Tibial artery (tissue), 4 donors: ENCODE measurements at regions of chr18 and their contacts with region 1.

Region 1: DNA sequence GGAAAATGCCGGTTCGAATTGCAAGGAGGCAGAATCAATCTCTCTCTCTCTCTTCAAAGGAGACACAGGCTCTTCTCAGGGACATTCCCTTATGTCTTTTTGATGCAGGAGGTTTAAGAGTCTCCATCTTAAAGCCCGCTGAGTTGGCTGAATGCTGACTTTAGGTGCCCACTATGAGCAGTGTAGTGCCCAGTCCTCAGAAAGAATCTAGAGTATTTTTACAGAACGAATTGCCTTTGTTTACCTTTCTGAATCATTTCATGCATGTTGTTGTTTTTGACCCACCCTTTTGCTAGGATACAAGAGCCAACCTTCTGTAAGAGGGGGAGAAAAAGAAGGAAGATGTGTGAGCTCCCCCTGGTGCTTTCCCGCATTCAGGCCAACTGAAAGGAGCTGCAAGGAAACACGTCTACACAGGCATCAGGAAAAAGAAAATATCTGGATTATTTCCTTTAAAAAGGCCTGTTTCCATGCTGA is 193.5 kb upstream of the TCF4 start:
- DNase-seq: no peak
- H3K4me3 ChIP-seq: no peak overlapping the region
- H3K27ac ChIP-seq: no peak overlapping the region
- H3K4me1 ChIP-seq: peaks cover 0 to 15% (median 10%) of the 10 kb centered on the region in 4 donors
- H3K27me3 ChIP-seq: peaks cover 3 to 14% of the 10 kb centered on the region in 2 donors
- CTCF ChIP-seq: peak; percentile 38 to 41

Region 2: DNA sequence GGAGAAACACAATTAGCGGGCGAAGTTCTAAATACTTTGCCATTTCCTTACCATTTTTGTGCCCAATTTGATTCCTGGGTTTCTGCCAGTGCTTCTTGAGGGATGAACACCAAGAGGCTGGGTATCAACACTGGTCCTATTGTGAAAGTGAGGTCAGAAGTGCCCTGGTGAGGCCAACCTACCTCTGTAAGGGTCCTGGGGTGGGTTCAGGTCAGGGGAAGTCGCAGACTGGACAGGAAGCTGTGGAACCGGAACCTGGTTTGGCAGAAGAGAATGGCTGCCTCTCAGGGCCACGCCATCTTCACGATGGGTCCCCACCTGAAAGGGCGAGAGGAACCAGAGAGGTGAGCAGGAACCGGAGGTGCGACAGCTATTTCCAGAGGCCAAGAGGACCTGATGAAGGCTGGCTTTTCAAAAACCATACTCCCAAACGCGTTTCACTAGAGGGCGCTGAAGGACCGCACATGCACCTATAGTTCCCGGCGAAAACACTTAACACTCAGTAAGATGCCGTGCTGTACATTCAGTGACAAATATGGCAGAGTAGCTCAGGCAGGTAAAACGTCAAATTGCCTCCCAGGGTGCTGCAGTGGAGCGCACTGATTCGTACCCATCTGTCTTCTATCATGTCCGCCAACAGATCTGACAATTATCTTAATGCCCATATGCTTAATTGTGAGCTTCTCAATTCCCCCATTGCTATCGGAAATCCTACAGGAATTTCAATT is 547.0 kb before region 1 on chr18:
- intact Hi-C with region 1: loop called (anchors 10 kb)
- DNase-seq: peak; percentile 78 to 79
- H3K4me3 ChIP-seq: peak overlapping the region in 1 of 2 donors; percentile 23
- H3K27ac ChIP-seq: no peak overlapping the region
- H3K4me1 ChIP-seq: peaks cover 0 to 17% (median 2%) of the 10 kb centered on the region in 4 donors
- H3K27me3 ChIP-seq: no peaks in the 10 kb centered on the region
- CTCF ChIP-seq: peak; percentile 71 to 79

Region 3: GRCh38 chr18:55415258-55415871 is 366.2 kb before region 1 on chr18:
- intact Hi-C with region 1: loop called (anchors 10 kb)
- DNase-seq: peak; percentile 88 to 94
- H3K4me3 ChIP-seq: no peak overlapping the region
- H3K27ac ChIP-seq: no peak overlapping the region
- H3K4me1 ChIP-seq: no peaks in the 10 kb centered on the region
- H3K27me3 ChIP-seq: no peaks in the 10 kb centered on the region
- CTCF ChIP-seq: peak; percentile 82 to 85

Region 4: GRCh38 chr18:55748227-55748738 is 33.2 kb before region 1 on chr18:
- intact Hi-C with region 1: no loop called
- DNase-seq: no peak
- H3K4me3 ChIP-seq: no peak overlapping the region
- H3K27ac ChIP-seq: no peak overlapping the region
- H3K4me1 ChIP-seq: no peaks in the 10 kb centered on the region
- H3K27me3 ChIP-seq: no peaks in the 10 kb centered on the region
- CTCF ChIP-seq: no peak